ENCODE measurements at regions of chr2 and their contacts with region 1.

Region 1: DNA sequence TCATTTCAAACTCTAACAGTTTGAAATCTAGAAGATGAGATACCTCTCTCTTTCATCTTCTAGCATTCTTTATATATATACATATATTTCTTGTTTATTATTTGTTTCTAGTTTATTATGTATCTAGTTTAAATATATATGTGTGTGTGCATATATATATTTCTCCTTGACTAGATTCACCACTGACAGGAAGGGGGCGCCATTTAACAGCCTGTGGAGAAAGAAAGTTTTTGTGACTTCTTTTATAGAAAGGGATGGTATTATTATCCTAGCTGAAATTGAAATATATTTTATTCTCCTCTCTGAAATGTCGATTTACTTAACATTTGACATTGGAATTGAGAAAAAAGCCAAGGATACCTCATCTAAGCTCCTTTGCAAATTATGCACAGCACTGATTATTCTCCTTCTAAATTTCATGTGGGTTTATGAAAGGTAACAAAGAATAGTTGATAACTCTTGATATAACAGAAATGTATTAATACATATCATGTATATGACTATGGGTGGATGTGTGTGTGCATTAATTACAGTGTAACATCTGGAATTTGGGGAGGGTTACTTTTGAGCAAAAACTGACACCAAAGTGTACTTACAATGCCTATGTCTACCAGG is 160.7 kb upstream of the NT5C1B start:
- DNase-seq: peak in 6 of 9 donors; percentile 19 to 36 (median 22)
- ATAC-seq: no peak
- H3K4me3 ChIP-seq: no peak overlapping the region
- H3K4me3 Mint-ChIP-seq: no peak overlapping the region
- H3K27ac ChIP-seq: no peak overlapping the region
- H3K27ac Mint-ChIP-seq: no peak overlapping the region
- H3K4me1 ChIP-seq: no peaks in the 10 kb centered on the region
- H3K4me1 Mint-ChIP-seq: no peaks in the 10 kb centered on the region
- H3K27me3 ChIP-seq: no peaks in the 10 kb centered on the region
- H3K27me3 Mint-ChIP-seq: no peaks in the 10 kb centered on the region

Region 2: GRCh38 chr2:18560031-18560796 is 189.8 kb before region 1 on chr2 and contains the start of gene RDH14:
- CTCF ChIA-PET with region 1: no interaction called
- POLR2A ChIA-PET with region 1: no interaction called
- intact Hi-C with region 1: no loop called
- DNase-seq: peak; percentile 83 to 93 (median 92)
- ATAC-seq: peak; percentile 94
- H3K4me3 ChIP-seq: peak within 1 kb of the TSS; percentile 71
- H3K4me3 Mint-ChIP-seq: peak within 1 kb of the TSS; percentile 86 to 96 (median 92)
- H3K27ac ChIP-seq: peak within 1 kb of the TSS; percentile 94
- H3K27ac Mint-ChIP-seq: peak within 1 kb of the TSS; percentile 92 to 98 (median 96)
- H3K4me1 ChIP-seq: peaks cover 6 to 16% of the 10 kb centered on the region in 2 donors
- H3K4me1 Mint-ChIP-seq: peaks cover 19 to 66% (median 52%) of the 10 kb centered on the region in 7 donors
- H3K27me3 ChIP-seq: no peaks in the 10 kb centered on the region
- H3K27me3 Mint-ChIP-seq: no peaks in the 10 kb centered on the region
- total RNA-seq, gene RDH14: 9.4 to 20.9 (median 14.9) TPM

Region 3: DNA sequence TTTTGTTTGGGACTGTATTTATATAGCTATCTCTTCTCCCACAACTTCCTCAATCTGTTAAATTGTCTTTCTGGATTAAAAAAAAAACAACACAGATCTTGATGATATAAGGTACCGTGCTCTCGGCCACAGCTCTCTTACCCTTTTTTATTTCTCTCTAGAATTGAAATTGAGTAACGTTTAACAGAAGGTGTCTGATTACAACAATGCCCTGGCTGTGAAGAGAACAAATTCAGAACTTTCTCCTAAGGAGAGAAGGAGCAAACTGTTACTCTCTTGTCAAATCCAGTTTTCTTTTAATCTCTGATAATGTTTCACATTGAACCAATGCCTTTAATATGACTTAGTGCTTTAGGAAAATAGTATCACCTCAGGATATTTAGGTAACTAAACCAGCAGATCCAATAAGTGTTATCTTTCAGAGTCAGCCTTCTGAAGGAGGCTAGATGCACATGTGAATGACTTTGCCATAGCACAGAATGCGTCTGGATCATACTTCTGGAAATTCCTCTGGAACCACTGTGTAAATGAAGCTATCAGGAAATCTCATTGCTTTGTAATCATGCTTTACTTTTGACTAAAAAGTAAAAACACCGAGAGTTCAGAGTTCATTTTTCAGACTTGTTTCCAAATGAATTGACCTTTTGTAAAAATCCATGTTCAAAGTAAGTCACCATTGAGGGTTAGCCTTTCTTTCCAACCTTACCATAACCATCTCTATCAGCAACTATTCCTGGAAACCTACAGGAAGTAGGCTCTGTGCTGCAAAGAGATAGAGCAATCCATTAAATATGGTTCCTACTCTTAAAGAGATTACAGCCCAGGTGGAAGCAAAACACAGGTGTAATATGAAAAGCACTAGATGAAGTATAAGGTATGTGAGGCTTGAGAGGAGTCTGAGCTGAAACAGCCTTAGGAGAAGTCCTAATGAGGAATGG is 755.4 kb after region 1 on chr2:
- CTCF ChIA-PET with region 1: no interaction called
- POLR2A ChIA-PET with region 1: no interaction called
- intact Hi-C with region 1: loop called in 1 of 2 experiments (anchors 2 kb)
- DNase-seq: no peak
- ATAC-seq: no peak
- H3K4me3 ChIP-seq: no peak overlapping the region
- H3K4me3 Mint-ChIP-seq: no peak overlapping the region
- H3K27ac ChIP-seq: no peak overlapping the region
- H3K27ac Mint-ChIP-seq: no peak overlapping the region
- H3K4me1 ChIP-seq: no peaks in the 10 kb centered on the region
- H3K4me1 Mint-ChIP-seq: no peaks in the 10 kb centered on the region
- H3K27me3 ChIP-seq: no peaks in the 10 kb centered on the region
- H3K27me3 Mint-ChIP-seq: peaks cover 16 to 54% (median 35%) of the 10 kb centered on the region in 5 donors